ENCODE measurements at regions of chr7 and their contacts with region 1.

Region 1: GRCh38 chr7:73851410-73852234 is 9.3 kb upstream of the METTL27 start:
- H3K4me3 Mint-ChIP-seq: no peak overlapping the region
- H3K27ac Mint-ChIP-seq: peak overlapping the region; percentile 71
- H3K4me1 Mint-ChIP-seq: peaks cover 63% of the 10 kb centered on the region
- H3K27me3 Mint-ChIP-seq: peaks cover 33% of the 10 kb centered on the region

Region 2: GRCh38 chr7:73623798-73624668 is 227.6 kb before region 1 on chr7 and contains the start of gene MLXIPL:
- intact Hi-C with region 1: loop called (anchors 10 kb)
- H3K4me3 Mint-ChIP-seq: peak within 1 kb of the TSS; percentile 56
- H3K27ac Mint-ChIP-seq: no peak within 1 kb of the TSS
- H3K4me1 Mint-ChIP-seq: peaks cover 14% of the 10 kb centered on the region
- H3K27me3 Mint-ChIP-seq: peaks cover 96% of the 10 kb centered on the region

Region 3: GRCh38 chr7:73701357-73701995 is 150.1 kb before region 1 on chr7:
- intact Hi-C with region 1: no loop called
- H3K4me3 Mint-ChIP-seq: no peak overlapping the region
- H3K27ac Mint-ChIP-seq: no peak overlapping the region
- H3K4me1 Mint-ChIP-seq: peaks cover 22% of the 10 kb centered on the region
- H3K27me3 Mint-ChIP-seq: peaks cover 49% of the 10 kb centered on the region

Region 4: DNA sequence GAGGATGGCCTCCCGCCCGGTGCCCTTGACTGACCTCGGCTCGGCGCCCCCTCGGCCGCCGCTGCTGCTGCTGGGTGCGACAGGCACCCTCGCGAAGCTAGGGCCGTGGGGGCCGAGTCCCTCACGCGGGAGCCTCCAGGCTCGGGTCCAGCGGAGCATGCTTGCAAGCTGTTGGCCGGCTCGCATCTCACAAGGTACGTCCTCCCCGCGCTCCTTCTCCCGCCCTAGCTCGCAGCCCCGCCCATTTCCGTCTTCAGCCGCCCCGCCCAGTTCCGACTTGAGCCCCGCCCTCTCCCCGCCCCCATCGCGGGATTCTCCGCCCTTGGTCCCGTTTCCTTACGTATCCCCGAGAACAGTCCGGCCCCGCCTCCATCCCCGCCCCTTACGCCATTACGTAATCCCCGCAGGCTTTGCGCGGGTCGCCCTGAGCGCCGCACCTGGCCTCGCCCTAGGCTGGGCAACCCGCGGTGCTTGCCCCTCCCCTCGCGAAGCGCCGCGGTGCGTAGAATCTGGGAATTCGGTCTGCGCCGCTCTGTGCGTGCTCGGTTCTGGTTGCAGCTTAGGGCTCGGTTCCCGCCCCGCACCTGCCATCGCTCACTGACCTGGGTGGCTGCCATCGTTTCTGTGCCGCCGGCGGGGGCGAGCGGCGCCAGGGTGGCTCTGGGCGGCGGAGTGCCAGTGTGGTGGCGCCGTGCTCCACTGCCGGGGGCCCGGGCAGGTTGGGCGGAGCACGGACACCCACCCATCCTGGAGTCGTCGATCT is 112.8 kb before region 1 on chr7 and contains the start of gene ABHD11:
- intact Hi-C with region 1: loop called (anchors 10 kb)
- H3K4me3 Mint-ChIP-seq: peak within 1 kb of the TSS; percentile 97
- H3K27ac Mint-ChIP-seq: peak within 1 kb of the TSS; percentile 96
- H3K4me1 Mint-ChIP-seq: peaks cover 39% of the 10 kb centered on the region
- H3K27me3 Mint-ChIP-seq: peaks cover 34% of the 10 kb centered on the region

Region 5: DNA sequence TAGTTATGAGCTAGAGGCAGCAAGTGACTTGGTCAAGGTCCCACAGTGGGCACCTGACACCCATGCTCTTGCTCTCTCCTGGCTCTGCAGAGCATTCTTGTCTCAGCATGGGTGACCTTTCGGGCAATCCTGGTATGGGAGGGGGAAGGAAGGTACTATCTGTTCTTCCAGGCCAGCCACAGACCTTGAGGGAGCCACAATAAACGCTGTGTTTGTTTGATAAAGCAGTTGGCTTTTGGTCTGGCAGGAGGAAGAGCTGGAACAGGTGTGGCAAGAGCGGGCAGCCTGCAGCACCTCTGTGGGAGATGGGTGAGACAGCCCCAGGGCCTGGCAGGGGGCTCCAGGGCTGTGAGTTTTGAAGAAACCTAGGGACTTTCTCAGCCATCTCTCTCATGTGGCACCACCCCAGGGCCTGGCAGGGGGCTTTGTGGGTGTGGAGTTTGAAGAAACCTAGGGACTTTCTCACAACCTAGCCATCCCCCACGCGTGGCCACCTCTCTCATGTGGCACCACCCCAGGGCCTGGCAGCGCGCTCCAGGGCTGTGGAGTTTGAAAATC is 93.0 kb before region 1 on chr7:
- intact Hi-C with region 1: no loop called
- H3K4me3 Mint-ChIP-seq: no peak overlapping the region
- H3K27ac Mint-ChIP-seq: no peak overlapping the region
- H3K4me1 Mint-ChIP-seq: no peaks in the 10 kb centered on the region
- H3K27me3 Mint-ChIP-seq: peaks cover 24% of the 10 kb centered on the region

Region 6: DNA sequence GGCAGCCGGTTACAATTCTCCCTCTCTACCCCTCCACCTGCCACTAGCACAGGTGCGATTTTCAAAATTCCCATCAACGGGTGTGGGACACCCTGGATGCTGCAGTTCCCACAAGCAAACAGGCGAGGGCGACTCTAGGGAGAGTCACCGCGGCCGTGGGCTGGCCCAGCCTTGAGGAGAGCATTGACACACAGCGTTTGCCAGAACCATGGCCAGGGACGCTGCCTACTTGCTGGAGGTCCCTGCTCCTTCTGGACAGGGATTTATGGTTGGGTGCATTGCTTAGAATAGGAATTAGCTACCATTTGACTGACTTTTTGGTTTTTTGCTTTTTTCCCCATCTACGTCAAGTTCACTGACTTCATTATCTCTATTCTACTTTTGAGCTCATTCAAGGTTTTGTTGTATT is 39.9 kb before region 1 on chr7:
- intact Hi-C with region 1: loop called (anchors 1 kb)
- H3K4me3 Mint-ChIP-seq: no peak overlapping the region
- H3K27ac Mint-ChIP-seq: peak overlapping the region; percentile 28
- H3K4me1 Mint-ChIP-seq: no peaks in the 10 kb centered on the region
- H3K27me3 Mint-ChIP-seq: peaks cover 34% of the 10 kb centered on the region

Region 7: DNA sequence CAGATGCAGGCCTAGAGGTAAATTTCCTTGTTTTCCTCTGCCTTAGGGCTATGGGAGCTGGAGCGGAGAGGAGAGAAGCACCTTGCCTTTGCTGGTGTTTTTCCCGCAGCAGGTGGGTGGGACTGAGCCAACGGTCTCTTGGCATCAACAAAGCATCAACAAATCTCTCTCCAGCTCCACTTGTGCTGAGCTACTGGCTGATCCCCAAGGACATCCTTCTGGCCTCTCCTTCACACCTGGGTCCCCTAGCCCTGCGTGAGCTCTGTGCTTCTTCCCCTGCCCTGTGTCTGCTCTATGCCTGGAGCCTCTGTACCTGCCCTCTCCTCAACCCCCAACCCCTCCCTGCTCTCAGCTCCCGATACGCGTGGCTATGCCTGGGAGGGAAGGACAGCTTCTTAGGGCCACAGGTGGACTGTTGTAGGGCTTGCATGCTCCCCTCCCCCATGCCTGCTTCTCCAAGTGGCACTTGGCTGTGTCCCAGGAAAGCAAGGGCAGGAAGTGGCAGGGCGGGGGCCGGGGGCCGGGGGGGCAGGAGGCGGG is 24.0 kb before region 1 on chr7:
- intact Hi-C with region 1: loop called (anchors 2 kb)
- H3K4me3 Mint-ChIP-seq: peak overlapping the region; percentile 49
- H3K27ac Mint-ChIP-seq: peak overlapping the region; percentile 98
- H3K4me1 Mint-ChIP-seq: peaks cover 97% of the 10 kb centered on the region
- H3K27me3 Mint-ChIP-seq: peaks cover 45% of the 10 kb centered on the region

Region 8: GRCh38 chr7:74164985-74165456 is 313.4 kb after region 1 on chr7:
- intact Hi-C with region 1: no loop called
- H3K4me3 Mint-ChIP-seq: no peak overlapping the region
- H3K27ac Mint-ChIP-seq: no peak overlapping the region
- H3K4me1 Mint-ChIP-seq: no peaks in the 10 kb centered on the region
- H3K27me3 Mint-ChIP-seq: no peaks in the 10 kb centered on the region

Measured in dendritic cell treated with granulocyte-macrophage colony-stimulating factor and Interleukin-4, amounts not matched to agents 40 ng/mL and 50 ng/mL, for 4 days (primary cell).